ENCODE measurements at regions of chr7 and their contacts with region 1.

Region 1: DNA sequence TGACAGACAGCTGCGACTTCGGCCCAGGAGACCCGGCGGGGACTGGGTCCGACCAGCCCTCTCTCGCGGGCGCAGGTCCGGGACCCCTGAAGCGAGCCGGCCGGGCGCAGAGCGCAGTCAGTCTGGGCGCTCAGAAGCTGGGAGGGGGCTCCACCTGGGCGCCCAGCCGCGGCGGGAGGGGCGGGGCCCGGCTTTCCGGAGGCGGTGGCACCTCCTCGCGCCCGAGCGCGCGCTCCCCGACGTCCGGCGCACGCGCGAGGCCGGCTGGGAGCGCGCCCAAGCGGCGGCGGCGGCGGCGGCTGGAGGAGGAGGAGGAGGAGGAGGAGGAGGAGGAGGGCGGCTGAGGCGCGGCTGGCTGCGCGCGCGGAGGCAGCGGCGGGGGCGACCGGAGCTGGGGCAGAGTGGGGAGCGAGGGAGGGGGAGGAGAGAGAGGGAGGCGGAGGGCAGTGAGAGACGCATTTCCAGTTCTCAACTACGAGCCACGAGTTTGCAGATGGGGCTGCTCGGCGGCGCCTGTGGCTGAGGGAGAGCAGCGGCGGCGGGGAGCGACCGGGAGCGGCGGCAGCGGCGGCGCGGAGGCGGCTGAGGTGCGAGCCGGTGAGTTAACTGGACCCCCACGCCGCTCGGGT is at the start of gene PALS2:
- DNase-seq: peak; percentile 71 to 91 (median 82)
- ATAC-seq: peak; percentile 82
- H3K4me3 ChIP-seq: peak within 1 kb of the TSS; percentile 81 to 88
- H3K4me3 Mint-ChIP-seq: peak within 1 kb of the TSS; percentile 94
- H3K27ac ChIP-seq: peak within 1 kb of the TSS; percentile 69 to 77
- H3K27ac Mint-ChIP-seq: peak within 1 kb of the TSS; percentile 92
- H3K4me1 ChIP-seq: peaks cover 31% of the 10 kb centered on the region
- H3K4me1 Mint-ChIP-seq: peaks cover 42% of the 10 kb centered on the region
- H3K27me3 ChIP-seq: no peaks in the 10 kb centered on the region
- H3K27me3 Mint-ChIP-seq: peaks cover 5% of the 10 kb centered on the region
- CTCF ChIP-seq: no peak
- total RNA-seq, gene PALS2: 31.7 to 32.8 TPM

Region 2: DNA sequence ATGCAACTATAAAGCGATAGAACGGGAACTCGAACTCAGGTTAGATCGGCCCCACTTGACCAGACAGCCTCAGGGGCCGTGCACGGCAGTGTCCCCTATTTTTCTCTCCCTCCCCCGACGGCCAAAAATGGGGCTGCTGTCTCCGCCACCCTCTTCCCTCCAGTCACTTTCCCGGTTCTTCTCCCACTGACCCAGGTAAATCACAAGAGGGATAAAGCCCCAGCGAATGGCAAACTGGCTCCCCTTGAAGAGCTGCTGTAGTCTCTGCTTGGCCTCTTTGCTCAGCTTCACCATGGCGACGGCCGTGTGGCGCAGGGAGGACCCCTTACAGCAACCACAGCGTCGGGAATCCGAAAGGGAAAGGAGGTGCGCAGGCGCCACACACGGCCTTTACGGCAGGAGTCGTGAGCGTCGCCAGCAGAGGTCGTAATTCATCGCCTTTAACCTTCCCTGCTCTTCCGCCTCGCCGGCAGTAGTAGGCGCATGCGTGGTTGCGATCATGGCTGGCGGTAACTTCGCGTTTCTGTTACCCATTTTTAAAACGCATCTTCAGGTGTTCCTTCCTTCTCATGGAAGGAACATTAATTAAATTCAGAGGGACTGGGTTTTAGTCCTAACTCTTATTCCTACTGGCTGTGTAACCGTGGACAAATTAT is 1750.5 kb before region 1 on chr7 and contains the start of gene TOMM7:
- CTCF ChIA-PET with region 1: no interaction called
- POLR2A ChIA-PET with region 1: no interaction called
- intact Hi-C with region 1: loop called in 1 of 2 experiments (anchors 2 kb)
- DNase-seq: peak; percentile 72 to 99 (median 86)
- ATAC-seq: peak; percentile 96
- H3K4me3 ChIP-seq: peak within 1 kb of the TSS; percentile 74 to 89
- H3K4me3 Mint-ChIP-seq: peak within 1 kb of the TSS; percentile 99
- H3K27ac ChIP-seq: peak within 1 kb of the TSS; percentile 85
- H3K27ac Mint-ChIP-seq: peak within 1 kb of the TSS; percentile 99
- H3K4me1 ChIP-seq: peaks cover 20% of the 10 kb centered on the region
- H3K4me1 Mint-ChIP-seq: peaks cover 41% of the 10 kb centered on the region
- H3K27me3 ChIP-seq: no peaks in the 10 kb centered on the region
- H3K27me3 Mint-ChIP-seq: peaks cover 4% of the 10 kb centered on the region
- CTCF ChIP-seq: no peak
- total RNA-seq, gene TOMM7: 595 to 610 TPM

Region 3: GRCh38 chr7:23546897-23547572 is 1026.1 kb before region 1 on chr7:
- CTCF ChIA-PET with region 1: no interaction called
- POLR2A ChIA-PET with region 1: no interaction called
- intact Hi-C with region 1: loop called in 1 of 2 experiments (anchors 5 kb)
- DNase-seq: peak; percentile 59 to 92 (median 75)
- ATAC-seq: peak; percentile 95
- H3K4me3 ChIP-seq: no peak overlapping the region
- H3K4me3 Mint-ChIP-seq: no peak overlapping the region
- H3K27ac ChIP-seq: no peak overlapping the region
- H3K27ac Mint-ChIP-seq: no peak overlapping the region
- H3K4me1 ChIP-seq: no peaks in the 10 kb centered on the region
- H3K4me1 Mint-ChIP-seq: peaks cover 9% of the 10 kb centered on the region
- H3K27me3 ChIP-seq: no peaks in the 10 kb centered on the region
- H3K27me3 Mint-ChIP-seq: no peaks in the 10 kb centered on the region
- CTCF ChIP-seq: peak; percentile 97

Region 4: DNA sequence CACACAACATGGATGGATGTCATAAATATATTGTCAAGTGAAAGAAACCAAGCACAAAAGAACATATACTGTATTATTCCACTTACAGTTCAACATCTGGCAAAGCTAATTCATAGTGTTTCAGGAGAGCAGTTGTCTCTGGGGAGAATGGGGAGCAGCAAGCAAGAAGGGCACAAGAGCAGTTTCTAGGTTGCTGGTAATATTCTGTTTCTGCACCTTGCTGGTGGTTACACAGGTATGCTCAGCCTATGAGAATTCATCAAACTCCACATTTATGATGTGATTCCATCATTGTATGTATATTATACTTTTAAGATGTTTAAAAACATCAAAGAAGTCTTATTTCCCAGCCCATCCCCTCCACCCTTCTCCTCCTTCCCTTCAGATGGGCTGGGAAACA is 17.9 kb before region 1 on chr7:
- CTCF ChIA-PET with region 1: interaction called, 3 read pairs
- POLR2A ChIA-PET with region 1: no interaction called
- intact Hi-C with region 1: loop called in 1 of 2 experiments (anchors 2 kb)
- DNase-seq: no peak
- ATAC-seq: no peak
- H3K4me3 ChIP-seq: no peak overlapping the region
- H3K4me3 Mint-ChIP-seq: no peak overlapping the region
- H3K27ac ChIP-seq: no peak overlapping the region
- H3K27ac Mint-ChIP-seq: no peak overlapping the region
- H3K4me1 ChIP-seq: peaks cover 1% of the 10 kb centered on the region
- H3K4me1 Mint-ChIP-seq: peaks cover 1% of the 10 kb centered on the region
- H3K27me3 ChIP-seq: no peaks in the 10 kb centered on the region
- H3K27me3 Mint-ChIP-seq: no peaks in the 10 kb centered on the region
- CTCF ChIP-seq: no peak

Region 5: GRCh38 chr7:24819916-24820689 is 247.0 kb after region 1 on chr7:
- CTCF ChIA-PET with region 1: no interaction called
- POLR2A ChIA-PET with region 1: interaction called, 3 read pairs
- intact Hi-C with region 1: loop called in 1 of 2 experiments (anchors 2 kb)
- DNase-seq: peak; percentile 30 to 90 (median 74)
- ATAC-seq: peak; percentile 5
- H3K4me3 ChIP-seq: peak overlapping the region in 1 of 2 experiments; percentile 19
- H3K4me3 Mint-ChIP-seq: peak overlapping the region; percentile 74
- H3K27ac ChIP-seq: peak overlapping the region; percentile 52 to 90
- H3K27ac Mint-ChIP-seq: peak overlapping the region; percentile 93
- H3K4me1 ChIP-seq: peaks cover 28% of the 10 kb centered on the region
- H3K4me1 Mint-ChIP-seq: peaks cover 30% of the 10 kb centered on the region
- H3K27me3 ChIP-seq: no peaks in the 10 kb centered on the region
- H3K27me3 Mint-ChIP-seq: no peaks in the 10 kb centered on the region
- CTCF ChIP-seq: peak; percentile 84

Region 6: GRCh38 chr7:25093268-25093826 is 520.2 kb after region 1 on chr7:
- CTCF ChIA-PET with region 1: no interaction called
- POLR2A ChIA-PET with region 1: no interaction called
- intact Hi-C with region 1: loop called in 1 of 2 experiments (anchors 10 kb)
- DNase-seq: peak; percentile 51 to 82 (median 75)
- ATAC-seq: peak; percentile 88
- H3K4me3 ChIP-seq: no peak overlapping the region
- H3K4me3 Mint-ChIP-seq: no peak overlapping the region
- H3K27ac ChIP-seq: no peak overlapping the region
- H3K27ac Mint-ChIP-seq: no peak overlapping the region
- H3K4me1 ChIP-seq: peaks cover 3% of the 10 kb centered on the region
- H3K4me1 Mint-ChIP-seq: peaks cover 6% of the 10 kb centered on the region
- H3K27me3 ChIP-seq: no peaks in the 10 kb centered on the region
- H3K27me3 Mint-ChIP-seq: peaks cover 2% of the 10 kb centered on the region
- CTCF ChIP-seq: peak; percentile 77

Measured in CD8-positive, alpha-beta T cell (primary cell).